Heart right ventricle (tissue), 16 donors: ENCODE measurements at regions of chr5 and their contacts with region 1.

Region 1: GRCh38 chr5:142881076-142881783 is 111.1 kb downstream of the ARHGAP26 start:
- DNase-seq: no peak
- ATAC-seq: peak in 5 of 8 donors; percentile 2 to 35 (median 13)
- H3K4me3 ChIP-seq: no peak overlapping the region
- H3K27ac ChIP-seq: peak overlapping the region in 9 of 10 donors; percentile 0 to 84 (median 58)
- H3K4me1 ChIP-seq: peaks cover 15 to 66% (median 53%) of the 10 kb centered on the region in 9 donors
- H3K27me3 ChIP-seq: no peaks in the 10 kb centered on the region
- CTCF ChIP-seq: no peak

Region 2: DNA sequence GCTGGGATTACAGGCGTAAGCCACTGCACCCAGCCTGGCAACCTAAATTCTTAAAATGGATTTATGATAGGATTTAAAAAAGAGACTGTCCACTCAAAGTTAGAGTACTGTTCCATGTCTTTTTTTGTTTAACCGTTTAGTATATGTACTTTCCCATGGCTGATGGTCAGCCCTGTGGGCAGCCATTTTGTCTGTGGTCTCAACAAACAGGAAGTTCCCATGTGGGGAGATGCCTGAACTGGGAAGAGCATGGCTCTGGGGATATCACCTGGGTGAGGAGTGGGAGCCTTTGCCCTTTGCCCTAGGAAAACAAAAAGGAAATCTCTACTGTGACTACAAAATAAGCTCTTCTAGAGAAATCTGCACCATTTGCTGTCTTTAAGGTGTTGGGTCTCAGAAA is 840.9 kb before region 1 on chr5:
- intact Hi-C with region 1: loop called in 1 of 10 experiments (anchors 5 kb)
- DNase-seq: no peak
- ATAC-seq: no peak
- H3K4me3 ChIP-seq: no peak overlapping the region
- H3K27ac ChIP-seq: no peak overlapping the region
- H3K4me1 ChIP-seq: peaks cover 0 to under 1% (median 0%) of the 10 kb centered on the region in 9 donors
- H3K27me3 ChIP-seq: no peaks in the 10 kb centered on the region
- CTCF ChIP-seq: no peak

Region 3: DNA sequence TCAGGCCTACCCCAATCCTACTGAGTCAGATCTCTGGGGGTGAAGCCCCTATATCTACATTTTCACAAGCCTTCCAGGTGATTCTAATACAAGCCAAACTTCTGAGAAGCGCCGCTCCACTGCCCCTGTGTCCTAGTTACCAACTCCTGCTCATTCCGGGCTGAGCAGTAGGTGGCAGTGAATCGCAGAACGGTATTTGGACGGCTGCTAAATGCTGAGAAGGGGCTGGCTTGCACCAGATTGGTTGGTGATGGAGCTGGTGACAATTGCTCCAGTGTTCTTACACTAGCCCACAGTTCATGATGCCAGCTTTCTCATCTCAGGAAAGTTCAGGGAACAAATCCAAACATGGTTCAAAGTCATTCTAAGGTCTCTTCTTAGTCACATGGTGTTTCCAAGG is 164.3 kb before region 1 on chr5:
- intact Hi-C with region 1: loop called (anchors 1 to 5 kb)
- DNase-seq: peak; percentile 38 to 62
- ATAC-seq: peak; percentile 21 to 72 (median 61)
- H3K4me3 ChIP-seq: peak overlapping the region in 1 of 10 donors; percentile 22
- H3K27ac ChIP-seq: peak overlapping the region; percentile 13 to 82 (median 68)
- H3K4me1 ChIP-seq: peaks cover 6 to 54% (median 34%) of the 10 kb centered on the region in 9 donors
- H3K27me3 ChIP-seq: no peaks in the 10 kb centered on the region
- CTCF ChIP-seq: peak in 7 of 9 donors; percentile 32 to 64 (median 43)

Region 4: DNA sequence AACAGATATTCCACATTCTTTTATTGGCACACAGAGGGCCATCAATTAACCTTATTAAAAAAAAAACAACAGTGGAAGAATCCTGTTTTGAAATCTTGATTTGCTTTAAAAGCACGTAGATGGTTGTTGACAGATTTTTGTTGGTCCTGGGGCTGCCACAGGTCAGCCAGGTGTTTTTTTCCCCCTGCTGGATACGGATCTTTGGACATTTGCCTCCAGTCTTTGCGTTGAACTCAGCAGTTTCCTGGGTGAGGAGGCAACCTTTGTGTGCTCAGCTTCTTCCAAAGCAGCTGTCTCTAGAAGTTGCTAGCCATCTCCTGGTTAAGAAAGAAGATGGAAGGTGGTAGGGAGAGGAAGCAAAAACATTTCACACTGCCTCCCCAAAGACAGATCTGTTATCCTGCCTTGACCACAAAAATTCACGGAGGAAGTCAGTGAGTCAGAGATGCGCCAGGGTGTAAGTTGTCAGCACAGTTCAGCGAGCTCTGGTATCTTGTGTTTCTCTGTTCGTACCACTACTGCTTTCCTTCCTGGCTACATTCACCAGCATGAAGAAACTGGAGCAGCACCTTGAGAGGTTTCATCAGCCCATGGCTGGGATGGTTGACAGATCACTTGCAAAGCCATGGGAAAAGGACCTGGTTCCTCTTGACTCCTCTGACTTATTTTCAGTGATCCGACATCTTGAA is 96.3 kb after region 1 on chr5:
- intact Hi-C with region 1: no loop called
- DNase-seq: no peak
- ATAC-seq: peak in 5 of 8 donors; percentile 20 to 44 (median 28)
- H3K4me3 ChIP-seq: no peak overlapping the region
- H3K27ac ChIP-seq: peak overlapping the region in 3 of 10 donors; percentile 16 to 73 (median 24)
- H3K4me1 ChIP-seq: peaks cover 10 to 75% (median 35%) of the 10 kb centered on the region in 9 donors
- H3K27me3 ChIP-seq: no peaks in the 10 kb centered on the region
- CTCF ChIP-seq: no peak

Region 5: DNA sequence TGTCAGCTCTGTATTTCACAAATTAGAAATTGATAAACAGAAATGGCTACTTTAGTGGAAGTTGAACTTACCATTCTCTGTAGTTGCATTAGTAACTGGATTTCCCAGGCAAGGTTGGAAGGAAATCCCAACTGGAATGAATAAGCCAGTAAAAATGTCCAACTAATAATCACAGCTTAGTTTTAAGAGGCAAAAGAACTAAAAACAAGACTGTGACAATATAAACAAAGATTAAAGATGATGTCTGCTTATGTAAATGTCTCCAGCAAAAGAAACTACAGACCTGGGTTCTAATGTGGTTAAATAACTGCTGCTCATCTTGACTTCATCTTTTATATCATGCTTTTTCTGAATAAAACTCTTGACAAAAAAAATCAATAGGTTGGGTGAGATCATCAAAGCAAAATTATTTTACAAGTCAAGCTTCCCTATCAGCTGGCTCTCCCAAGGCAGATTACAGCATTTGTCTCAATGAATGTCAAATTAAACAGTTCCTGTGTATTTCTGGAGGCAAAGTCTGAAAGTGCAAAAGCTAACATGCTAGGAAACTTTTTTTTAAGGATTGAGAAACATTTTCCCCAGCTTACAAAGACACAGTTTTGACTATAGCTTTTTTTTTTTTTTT is 868.5 kb after region 1 on chr5:
- intact Hi-C with region 1: no loop called
- DNase-seq: no peak
- ATAC-seq: no peak
- H3K4me3 ChIP-seq: no peak overlapping the region
- H3K27ac ChIP-seq: no peak overlapping the region
- H3K4me1 ChIP-seq: no peaks in the 10 kb centered on the region
- H3K27me3 ChIP-seq: no peaks in the 10 kb centered on the region
- CTCF ChIP-seq: no peak